ENCODE measurements at regions of chr12 and their contacts with region 1.

Region 1: DNA sequence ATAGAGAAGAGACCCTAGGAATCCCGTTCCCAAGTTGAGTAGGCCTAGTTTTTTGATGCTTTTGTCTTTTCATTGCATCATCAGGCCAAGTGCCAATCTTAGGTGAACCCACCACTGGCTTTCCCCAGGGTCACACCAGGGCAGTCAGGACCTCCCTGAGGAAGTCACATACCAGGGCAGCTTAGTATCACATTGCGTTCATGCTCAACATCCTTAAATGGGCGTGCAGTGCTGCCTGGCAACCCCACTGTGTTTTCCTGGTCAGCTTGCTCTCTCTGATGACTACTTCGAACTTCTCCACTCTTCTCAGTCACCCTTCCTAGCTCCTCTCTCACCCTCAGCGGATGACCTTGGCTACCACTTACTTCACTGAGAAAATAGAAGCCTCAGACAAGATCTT is 9.0 kb downstream of the ASIC1 start:
- DNase-seq: no peak
- H3K4me3 ChIP-seq: no peak overlapping the region
- H3K27ac ChIP-seq: no peak overlapping the region
- H3K4me1 ChIP-seq: peaks cover 4% of the 10 kb centered on the region
- H3K27me3 ChIP-seq: peaks cover 25 to 26% of the 10 kb centered on the region in 2 experiments
- CTCF ChIP-seq: no peak
- POLR2A ChIP-seq: no peak

Region 2: GRCh38 chr12:48350249-48351021 is 1716.0 kb before region 1 on chr12 and contains the start of gene ZNF641:
- CTCF ChIA-PET with region 1: no interaction called
- POLR2A ChIA-PET with region 1: no interaction called
- dilution Hi-C with region 1: no loop called
- intact Hi-C with region 1: no loop called
- DNase-seq: peak; percentile 51
- H3K4me3 ChIP-seq: peak within 1 kb of the TSS; percentile 56 to 87 (median 63)
- H3K27ac ChIP-seq: no peak within 1 kb of the TSS
- H3K4me1 ChIP-seq: peaks cover 5% of the 10 kb centered on the region
- H3K27me3 ChIP-seq: no peaks in the 10 kb centered on the region
- CTCF ChIP-seq: no peak
- POLR2A ChIP-seq: peak; percentile 39
- total RNA-seq, gene ZNF641: 5.0 and 6.7 TPM in 2 replicates

Region 3: DNA sequence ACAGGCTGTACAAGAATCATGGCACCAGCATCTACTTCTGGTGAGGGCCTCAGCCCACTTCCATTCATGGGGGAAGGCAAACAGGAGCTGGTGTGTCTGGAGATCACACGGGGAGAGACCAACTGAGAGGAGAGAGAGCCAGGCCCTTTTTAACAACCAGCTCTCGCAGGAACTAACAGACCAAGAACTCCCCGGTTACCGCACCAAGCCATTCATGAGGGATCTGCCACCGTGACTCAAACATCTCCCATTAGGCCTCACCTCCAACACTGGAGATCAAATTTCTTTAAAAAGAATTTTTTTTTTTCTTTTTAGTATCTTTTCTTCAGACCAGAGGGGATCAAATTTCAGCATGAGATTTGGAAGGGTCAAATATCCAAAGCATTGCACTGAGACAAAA is 132.6 kb before region 1 on chr12:
- CTCF ChIA-PET with region 1: no interaction called
- POLR2A ChIA-PET with region 1: no interaction called
- dilution Hi-C with region 1: no loop called
- intact Hi-C with region 1: no loop called
- DNase-seq: no peak
- H3K4me3 ChIP-seq: no peak overlapping the region
- H3K27ac ChIP-seq: no peak overlapping the region
- H3K4me1 ChIP-seq: no peaks in the 10 kb centered on the region
- H3K27me3 ChIP-seq: no peaks in the 10 kb centered on the region
- CTCF ChIP-seq: no peak
- POLR2A ChIP-seq: no peak

Region 4: DNA sequence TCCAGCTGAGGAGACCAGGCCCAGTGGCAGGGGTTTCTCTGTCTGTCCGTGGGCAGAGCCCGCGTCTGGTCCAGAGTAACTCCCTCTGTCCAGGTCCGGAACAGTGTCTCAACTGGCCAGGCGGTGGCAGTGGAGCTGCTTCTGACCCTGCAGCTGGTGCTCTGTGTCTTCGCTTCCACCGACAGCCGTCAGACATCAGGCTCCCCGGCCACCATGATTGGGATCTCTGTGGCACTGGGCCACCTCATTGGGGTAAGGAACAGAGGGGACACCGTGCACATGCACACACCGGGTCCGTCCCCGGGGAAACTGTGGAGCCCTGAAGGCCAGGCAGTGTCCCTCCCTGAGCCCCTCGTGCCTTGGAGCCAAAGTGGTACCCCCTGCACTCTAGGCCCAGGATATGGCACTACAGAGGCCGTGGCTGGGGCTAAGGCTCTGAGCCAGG is 92.2 kb before region 1 on chr12:
- CTCF ChIA-PET with region 1: interaction called, 317 read pairs
- POLR2A ChIA-PET with region 1: no interaction called
- dilution Hi-C with region 1: loop called (anchors 25 kb)
- intact Hi-C with region 1: loop called (anchors 1 kb)
- DNase-seq: peak; percentile 47
- H3K4me3 ChIP-seq: no peak overlapping the region
- H3K27ac ChIP-seq: no peak overlapping the region
- H3K4me1 ChIP-seq: no peaks in the 10 kb centered on the region
- H3K27me3 ChIP-seq: peaks cover 7 to 9% of the 10 kb centered on the region in 2 experiments
- CTCF ChIP-seq: peak; percentile 53 to 80
- POLR2A ChIP-seq: no peak